Left lung (tissue), 14 donors: ENCODE measurements at regions of chr3 and their contacts with region 1.

Region 1: GRCh38 chr3:176939022-176939817 is 258.1 kb downstream of the TBL1XR1 start:
- DNase-seq: peak in 2 of 4 donors; percentile 54 to 82
- ATAC-seq: peak; percentile 96
- H3K4me3 ChIP-seq: no peak overlapping the region
- H3K27ac ChIP-seq: no peak overlapping the region
- H3K4me1 ChIP-seq: no peaks in the 10 kb centered on the region
- H3K27me3 ChIP-seq: no peaks in the 10 kb centered on the region
- CTCF ChIP-seq: peak; percentile 61 to 67

Region 2: GRCh38 chr3:176872771-176873209 is 66.4 kb before region 1 on chr3:
- intact Hi-C with region 1: loop called in 1 of 2 experiments (anchors 10 kb)
- DNase-seq: peak in 2 of 4 donors; percentile 25 to 34
- ATAC-seq: peak; percentile 77
- H3K4me3 ChIP-seq: no peak overlapping the region
- H3K27ac ChIP-seq: no peak overlapping the region
- H3K4me1 ChIP-seq: peaks cover 0 to 3% of the 10 kb centered on the region in 2 donors
- H3K27me3 ChIP-seq: no peaks in the 10 kb centered on the region
- CTCF ChIP-seq: peak; percentile 70 to 72